Caco-2 (cell line): ENCODE measurements at regions of chr3 and their contacts with region 1.

Region 1: DNA sequence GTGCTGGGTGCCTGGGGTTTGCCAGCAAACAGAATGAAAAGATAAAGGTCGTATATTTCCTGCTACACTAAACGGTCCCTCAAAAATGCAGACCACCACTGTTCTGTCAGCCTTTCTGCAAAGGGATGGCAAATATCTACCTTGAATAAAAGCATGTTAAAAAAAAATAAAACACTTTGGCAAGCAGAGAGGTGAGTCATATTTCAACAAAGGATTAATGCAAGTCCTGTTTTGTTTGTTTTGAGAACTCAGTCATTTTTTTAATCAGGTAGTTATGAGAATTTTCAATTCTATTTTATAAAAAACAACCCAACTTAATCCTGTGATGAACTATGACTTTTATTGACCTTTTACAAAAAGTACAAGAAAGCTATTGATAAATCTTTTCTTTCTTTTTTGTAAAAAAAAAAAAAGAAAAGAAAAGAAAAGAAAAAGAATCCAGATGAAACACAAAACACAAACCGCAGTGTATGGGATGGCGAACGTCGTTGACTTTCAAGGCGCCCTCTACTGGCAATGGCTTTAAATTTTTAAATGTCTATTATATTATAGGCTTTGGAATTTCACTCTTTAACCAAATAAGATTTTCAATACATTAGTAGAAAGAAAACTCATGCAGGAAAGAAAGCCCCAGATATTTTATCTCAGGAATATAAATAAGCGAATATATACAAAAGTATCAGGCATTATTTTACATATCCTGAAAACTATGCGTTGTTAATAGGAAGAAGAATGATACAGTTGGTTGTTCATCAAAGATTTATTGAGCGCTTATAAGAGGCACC is 87.8 kb downstream of the NCEH1 start:
- DNase-seq: peak in 1 of 2 experiments; percentile 37
- H3K4me3 ChIP-seq: no peak overlapping the region
- H3K4me3 Mint-ChIP-seq: no peak overlapping the region
- H3K27ac Mint-ChIP-seq: no peak overlapping the region
- H3K4me1 ChIP-seq: no peaks in the 10 kb centered on the region
- H3K4me1 Mint-ChIP-seq: no peaks in the 10 kb centered on the region
- H3K27me3 ChIP-seq: no peaks in the 10 kb centered on the region
- H3K27me3 Mint-ChIP-seq: no peaks in the 10 kb centered on the region
- CTCF ChIP-seq: peak; percentile 52 to 54

Region 2: DNA sequence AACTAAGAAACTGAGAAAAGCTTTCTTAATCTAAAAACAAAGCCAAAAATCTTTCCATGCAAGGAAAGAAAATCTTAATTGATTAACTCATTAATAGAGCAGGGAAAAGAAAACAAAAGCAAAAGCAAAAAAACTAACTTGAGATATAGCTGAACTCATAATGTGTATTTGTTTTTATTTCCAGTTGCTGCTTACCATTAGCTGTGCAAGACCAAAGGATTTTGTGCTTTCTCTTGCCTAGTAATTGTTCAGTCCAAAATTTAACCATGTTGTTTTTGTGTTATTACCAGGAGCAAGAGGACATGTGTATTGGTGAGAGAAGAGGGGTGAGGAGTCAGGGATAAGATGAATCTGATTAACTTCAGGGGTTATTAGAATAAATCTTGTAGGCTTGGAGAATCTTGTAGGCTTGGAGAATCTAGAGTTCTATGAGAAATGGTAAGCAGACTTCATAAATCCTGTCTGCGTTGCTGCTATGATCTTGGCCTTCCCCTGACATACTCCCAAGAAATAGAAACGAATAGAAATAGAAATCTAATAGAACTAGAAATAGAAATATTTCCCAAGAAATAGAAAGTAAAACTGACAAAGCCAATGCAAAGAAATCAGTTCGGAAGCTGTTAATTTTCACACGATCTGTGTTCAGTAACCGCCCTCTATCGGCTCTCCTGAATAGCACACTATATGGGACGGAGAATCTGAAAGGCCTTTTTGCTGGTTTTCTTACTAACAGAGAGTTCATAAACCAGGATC is 27.3 kb before region 1 on chr3:
- CTCF ChIA-PET with region 1: interaction called, 4 read pairs
- POLR2A ChIA-PET with region 1: no interaction called
- intact Hi-C with region 1: loop called (anchors 1 kb)
- DNase-seq: peak in 1 of 2 experiments; percentile 15
- H3K4me3 ChIP-seq: no peak overlapping the region
- H3K4me3 Mint-ChIP-seq: no peak overlapping the region
- H3K27ac Mint-ChIP-seq: no peak overlapping the region
- H3K4me1 ChIP-seq: peaks cover 19% of the 10 kb centered on the region
- H3K4me1 Mint-ChIP-seq: peaks cover 25% of the 10 kb centered on the region
- H3K27me3 ChIP-seq: no peaks in the 10 kb centered on the region
- H3K27me3 Mint-ChIP-seq: no peaks in the 10 kb centered on the region
- CTCF ChIP-seq: peak; percentile 46 to 76

Region 3: DNA sequence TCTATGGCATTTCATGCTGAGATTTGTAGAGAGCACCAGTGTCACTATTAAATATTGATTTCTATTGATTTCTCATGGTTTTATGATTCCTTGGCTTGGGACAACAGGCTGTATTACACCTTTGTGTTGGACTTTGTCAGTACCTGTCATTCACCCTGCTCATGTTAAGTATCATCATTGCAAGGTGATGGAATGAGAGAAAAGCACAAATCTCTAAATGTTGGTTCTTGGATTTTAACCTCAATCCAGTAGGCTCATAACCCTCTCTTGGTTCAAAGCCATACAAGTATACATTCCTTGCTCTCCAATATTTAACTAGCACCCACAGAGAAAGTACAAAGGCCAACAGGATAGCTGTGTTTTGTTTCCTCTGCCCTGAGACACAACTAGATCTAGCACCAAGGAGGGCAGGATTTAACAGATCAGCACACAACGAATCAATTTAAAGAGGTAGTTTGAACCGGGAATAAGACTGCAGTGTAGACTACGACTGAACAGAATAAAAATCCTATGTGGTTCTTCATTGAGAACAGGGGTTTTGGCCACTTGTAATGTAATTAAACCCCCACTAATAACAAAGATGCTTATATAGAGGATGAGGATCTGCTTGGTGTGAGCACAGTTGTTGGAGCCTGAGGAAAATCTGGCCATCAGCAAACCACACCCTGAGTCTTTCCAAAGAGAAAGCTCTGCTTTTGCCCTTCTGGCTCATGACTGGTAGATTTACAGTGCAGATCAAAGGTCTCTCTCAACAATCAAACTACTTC is 21.9 kb before region 1 on chr3:
- CTCF ChIA-PET with region 1: interaction called, 5 read pairs
- POLR2A ChIA-PET with region 1: no interaction called
- intact Hi-C with region 1: loop called (anchors 1 kb)
- DNase-seq: peak in 1 of 2 experiments; percentile 38
- H3K4me3 ChIP-seq: no peak overlapping the region
- H3K4me3 Mint-ChIP-seq: peak overlapping the region; percentile 61
- H3K27ac Mint-ChIP-seq: peak overlapping the region; percentile 84
- H3K4me1 ChIP-seq: peaks cover 18% of the 10 kb centered on the region
- H3K4me1 Mint-ChIP-seq: peaks cover 18% of the 10 kb centered on the region
- H3K27me3 ChIP-seq: no peaks in the 10 kb centered on the region
- H3K27me3 Mint-ChIP-seq: no peaks in the 10 kb centered on the region
- CTCF ChIP-seq: no peak

Region 4: DNA sequence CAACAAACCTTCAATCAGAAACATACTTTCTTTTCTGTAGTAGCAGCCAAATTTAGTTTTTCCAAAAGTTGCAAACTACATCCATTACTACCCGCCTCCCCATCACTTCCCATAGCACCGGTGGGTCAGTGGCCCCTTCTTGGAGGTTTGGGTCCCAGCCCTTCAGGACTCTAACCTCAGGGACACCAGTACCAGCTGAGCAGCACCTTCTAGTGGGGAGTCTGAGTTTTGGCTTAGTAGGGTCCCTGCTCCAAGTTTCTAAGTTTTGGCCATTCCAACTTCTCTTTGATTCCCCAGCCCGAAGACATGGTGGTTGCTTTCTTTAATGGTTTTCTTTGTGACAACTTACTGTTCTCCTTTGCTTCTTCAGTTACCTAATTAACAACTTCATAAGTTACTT is 288.0 kb after region 1 on chr3:
- CTCF ChIA-PET with region 1: interaction called, 11 read pairs
- POLR2A ChIA-PET with region 1: no interaction called
- intact Hi-C with region 1: no loop called
- DNase-seq: no peak
- H3K4me3 ChIP-seq: no peak overlapping the region
- H3K4me3 Mint-ChIP-seq: no peak overlapping the region
- H3K27ac Mint-ChIP-seq: no peak overlapping the region
- H3K4me1 ChIP-seq: 0 out of 2 replicates have a peak, but pooled peaks cover 3% of the 10 kb centered on the region
- H3K4me1 Mint-ChIP-seq: no peaks in the 10 kb centered on the region
- H3K27me3 ChIP-seq: no peaks in the 10 kb centered on the region
- H3K27me3 Mint-ChIP-seq: peaks cover 6% of the 10 kb centered on the region
- CTCF ChIP-seq: no peak